ENCODE measurements at regions of chr17 and their contacts with region 1.

Region 1: GRCh38 chr17:78708510-78708973 is 73.5 kb downstream of the CYTH1 start:
- DNase-seq: peak; percentile 53 to 65 (median 59)
- H3K4me3 ChIP-seq: no peak overlapping the region
- H3K4me3 Mint-ChIP-seq: peak overlapping the region in 7 of 8 donors; percentile 43 to 78 (median 66)
- H3K27ac ChIP-seq: peak overlapping the region; percentile 31
- H3K27ac Mint-ChIP-seq: peak overlapping the region; percentile 83 to 95 (median 91)
- H3K4me1 ChIP-seq: peaks cover 54% of the 10 kb centered on the region
- H3K4me1 Mint-ChIP-seq: peaks cover 41 to 65% (median 54%) of the 10 kb centered on the region in 4 donors
- H3K27me3 ChIP-seq: no peaks in the 10 kb centered on the region
- H3K27me3 Mint-ChIP-seq: no peaks in the 10 kb centered on the region

Region 2: DNA sequence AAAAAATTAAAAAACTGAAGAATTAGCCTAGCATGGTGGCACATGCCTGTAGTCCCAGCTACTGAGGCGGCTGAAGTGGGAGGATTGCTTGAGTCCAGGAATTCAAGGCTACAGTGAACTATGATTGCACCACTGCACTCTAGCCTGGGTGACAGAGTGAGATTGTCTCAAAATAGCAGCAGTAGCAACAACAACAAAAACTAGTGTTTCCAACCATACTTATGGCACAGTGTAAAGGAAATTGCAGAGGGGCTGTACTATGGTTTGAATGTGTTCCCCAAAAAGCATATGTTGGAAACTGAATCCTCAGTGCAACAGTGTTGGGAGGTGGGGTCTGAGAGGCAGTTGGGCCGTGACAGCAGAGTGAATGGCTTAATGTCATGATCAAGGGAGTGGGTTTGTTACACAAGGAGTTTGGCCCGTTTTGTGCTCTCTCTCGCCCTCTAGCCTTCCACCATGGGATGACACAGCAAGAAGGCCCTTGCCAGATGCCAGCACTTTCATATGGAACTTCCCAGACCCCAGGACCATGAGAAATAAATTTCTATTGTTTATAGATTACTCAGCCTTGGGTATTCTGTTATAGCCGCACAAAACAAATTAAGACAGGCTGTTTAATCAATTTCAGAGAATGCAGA is 260.1 kb before region 1 on chr17:
- CTCF ChIA-PET with region 1: interaction called, 7 read pairs
- POLR2A ChIA-PET with region 1: no interaction called
- intact Hi-C with region 1: loop called (anchors 5 kb)
- DNase-seq: no peak
- H3K4me3 ChIP-seq: no peak overlapping the region
- H3K4me3 Mint-ChIP-seq: no peak overlapping the region
- H3K27ac ChIP-seq: no peak overlapping the region
- H3K27ac Mint-ChIP-seq: peak overlapping the region in 1 of 7 donors; percentile 26
- H3K4me1 ChIP-seq: no peaks in the 10 kb centered on the region
- H3K4me1 Mint-ChIP-seq: peaks cover 0 to 2% (median 0%) of the 10 kb centered on the region in 4 donors
- H3K27me3 ChIP-seq: no peaks in the 10 kb centered on the region
- H3K27me3 Mint-ChIP-seq: no peaks in the 10 kb centered on the region

Region 3: GRCh38 chr17:78697554-78698343 is 10.8 kb before region 1 on chr17:
- CTCF ChIA-PET with region 1: interaction called, 17 read pairs
- POLR2A ChIA-PET with region 1: interaction called, 4 read pairs
- intact Hi-C with region 1: no loop called
- DNase-seq: no peak
- H3K4me3 ChIP-seq: no peak overlapping the region
- H3K4me3 Mint-ChIP-seq: peak overlapping the region in 2 of 8 donors; percentile 35 to 56
- H3K27ac ChIP-seq: no peak overlapping the region
- H3K27ac Mint-ChIP-seq: peak overlapping the region; percentile 36 to 86 (median 78)
- H3K4me1 ChIP-seq: no peaks in the 10 kb centered on the region
- H3K4me1 Mint-ChIP-seq: peaks cover 10 to 17% (median 14%) of the 10 kb centered on the region in 4 donors
- H3K27me3 ChIP-seq: no peaks in the 10 kb centered on the region
- H3K27me3 Mint-ChIP-seq: no peaks in the 10 kb centered on the region

Region 4: GRCh38 chr17:78728495-78728894 is 20.0 kb after region 1 on chr17:
- CTCF ChIA-PET with region 1: interaction called, 24 read pairs
- POLR2A ChIA-PET with region 1: interaction called, 20 read pairs
- intact Hi-C with region 1: no loop called
- DNase-seq: no peak
- H3K4me3 ChIP-seq: no peak overlapping the region
- H3K4me3 Mint-ChIP-seq: peak overlapping the region in 7 of 8 donors; percentile 39 to 91 (median 67)
- H3K27ac ChIP-seq: no peak overlapping the region
- H3K27ac Mint-ChIP-seq: peak overlapping the region in 6 of 7 donors; percentile 19 to 88 (median 52)
- H3K4me1 ChIP-seq: peaks cover 99% of the 10 kb centered on the region
- H3K4me1 Mint-ChIP-seq: peaks cover 70 to 95% (median 85%) of the 10 kb centered on the region in 4 donors
- H3K27me3 ChIP-seq: no peaks in the 10 kb centered on the region
- H3K27me3 Mint-ChIP-seq: no peaks in the 10 kb centered on the region

Region 5: GRCh38 chr17:78745407-78746088 is 37.0 kb after region 1 on chr17:
- CTCF ChIA-PET with region 1: interaction called, 15 read pairs
- POLR2A ChIA-PET with region 1: interaction called, 15 read pairs
- intact Hi-C with region 1: loop called (anchors 2 kb)
- DNase-seq: peak in 4 of 5 donors; percentile 56 to 61 (median 60)
- H3K4me3 ChIP-seq: peak overlapping the region; percentile 9 to 31
- H3K4me3 Mint-ChIP-seq: peak overlapping the region; percentile 67 to 89 (median 78)
- H3K27ac ChIP-seq: peak overlapping the region; percentile 73
- H3K27ac Mint-ChIP-seq: peak overlapping the region; percentile 88 to 98 (median 94)
- H3K4me1 ChIP-seq: peaks cover 98% of the 10 kb centered on the region
- H3K4me1 Mint-ChIP-seq: peaks cover 76 to 98% (median 85%) of the 10 kb centered on the region in 4 donors
- H3K27me3 ChIP-seq: no peaks in the 10 kb centered on the region
- H3K27me3 Mint-ChIP-seq: no peaks in the 10 kb centered on the region

Region 6: GRCh38 chr17:78781948-78782916 is 73.7 kb after region 1 on chr17 and contains the start of gene CYTH1:
- CTCF ChIA-PET with region 1: interaction called, 19 read pairs
- POLR2A ChIA-PET with region 1: interaction called, 23 read pairs
- intact Hi-C with region 1: no loop called
- DNase-seq: peak; percentile 95 to 99 (median 96)
- H3K4me3 ChIP-seq: peak within 1 kb of the TSS; percentile 63 to 91
- H3K4me3 Mint-ChIP-seq: peak within 1 kb of the TSS; percentile 89 to 96 (median 94)
- H3K27ac ChIP-seq: peak within 1 kb of the TSS; percentile 95
- H3K27ac Mint-ChIP-seq: peak within 1 kb of the TSS; percentile 93 to 99 (median 96)
- H3K4me1 ChIP-seq: peaks cover 75% of the 10 kb centered on the region
- H3K4me1 Mint-ChIP-seq: peaks cover 27 to 71% (median 47%) of the 10 kb centered on the region in 4 donors
- H3K27me3 ChIP-seq: no peaks in the 10 kb centered on the region
- H3K27me3 Mint-ChIP-seq: no peaks in the 10 kb centered on the region
- total RNA-seq, gene CYTH1: 380 to 390 TPM

Region 7: DNA sequence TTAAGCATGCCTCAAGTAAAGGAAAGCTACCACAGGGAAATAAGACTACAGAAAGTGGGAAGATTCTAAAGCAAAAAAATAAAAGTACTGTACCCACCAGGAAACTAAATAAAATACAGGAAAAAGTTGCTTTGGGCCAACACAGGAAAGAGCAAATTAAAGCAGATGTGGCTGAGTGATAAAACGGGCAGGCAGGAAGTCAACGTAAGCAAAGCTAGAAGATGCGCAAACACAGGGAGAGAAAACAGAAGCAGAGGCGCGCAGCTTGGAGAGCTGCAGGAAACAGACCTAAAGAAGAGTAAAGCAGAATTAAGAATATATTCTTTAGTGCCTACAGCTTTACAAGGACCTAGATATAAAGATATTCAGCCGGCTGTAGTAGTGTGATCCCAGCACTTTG is 110.4 kb after region 1 on chr17:
- CTCF ChIA-PET with region 1: interaction called, 17 read pairs
- POLR2A ChIA-PET with region 1: interaction called, 4 read pairs
- intact Hi-C with region 1: no loop called
- DNase-seq: peak; percentile 82 to 87 (median 84)
- H3K4me3 ChIP-seq: peak overlapping the region in 1 of 2 donors; percentile 35
- H3K4me3 Mint-ChIP-seq: peak overlapping the region; percentile 56 to 83 (median 76)
- H3K27ac ChIP-seq: peak overlapping the region; percentile 83
- H3K27ac Mint-ChIP-seq: peak overlapping the region; percentile 86 to 100 (median 96)
- H3K4me1 ChIP-seq: peaks cover 59% of the 10 kb centered on the region
- H3K4me1 Mint-ChIP-seq: peaks cover 33 to 81% (median 50%) of the 10 kb centered on the region in 4 donors
- H3K27me3 ChIP-seq: no peaks in the 10 kb centered on the region
- H3K27me3 Mint-ChIP-seq: no peaks in the 10 kb centered on the region

Measured in CD4-positive, alpha-beta memory T cell (primary cell).